ENCODE measurements at regions of chr5 and their contacts with region 1.

Region 1: GRCh38 chr5:148730943-148731861 is 76.9 kb upstream of the HTR4 start:
- DNase-seq: peak; percentile 21 to 85 (median 64)
- ATAC-seq: peak; percentile 95
- H3K4me3 ChIP-seq: peak overlapping the region in 1 of 2 experiments; percentile 31
- H3K4me3 Mint-ChIP-seq: peak overlapping the region; percentile 67
- H3K27ac ChIP-seq: no peak overlapping the region
- H3K27ac Mint-ChIP-seq: no peak overlapping the region
- H3K4me1 ChIP-seq: no peaks in the 10 kb centered on the region
- H3K4me1 Mint-ChIP-seq: peaks cover 5% of the 10 kb centered on the region
- H3K27me3 ChIP-seq: no peaks in the 10 kb centered on the region
- H3K27me3 Mint-ChIP-seq: peaks cover 3% of the 10 kb centered on the region
- CTCF ChIP-seq: peak; percentile 99

Region 2: GRCh38 chr5:147857302-147858129 is 873.7 kb before region 1 on chr5:
- CTCF ChIA-PET with region 1: interaction called, 3 read pairs
- POLR2A ChIA-PET with region 1: no interaction called
- intact Hi-C with region 1: loop called (anchors 5 kb)
- DNase-seq: peak in 7 of 9 experiments; percentile 1 to 56 (median 24)
- ATAC-seq: peak; percentile 40
- H3K4me3 ChIP-seq: no peak overlapping the region
- H3K4me3 Mint-ChIP-seq: no peak overlapping the region
- H3K27ac ChIP-seq: no peak overlapping the region
- H3K27ac Mint-ChIP-seq: no peak overlapping the region
- H3K4me1 ChIP-seq: no peaks in the 10 kb centered on the region
- H3K4me1 Mint-ChIP-seq: peaks cover 4% of the 10 kb centered on the region
- H3K27me3 ChIP-seq: no peaks in the 10 kb centered on the region
- H3K27me3 Mint-ChIP-seq: peaks cover 17% of the 10 kb centered on the region
- CTCF ChIP-seq: peak; percentile 83

Region 3: GRCh38 chr5:148290271-148291195 is 440.7 kb before region 1 on chr5:
- CTCF ChIA-PET with region 1: interaction called, 7 read pairs
- POLR2A ChIA-PET with region 1: no interaction called
- intact Hi-C with region 1: loop called in 1 of 2 experiments (anchors 5 kb)
- DNase-seq: peak in 2 of 9 experiments; percentile 3 to 24
- ATAC-seq: no peak
- H3K4me3 ChIP-seq: no peak overlapping the region
- H3K4me3 Mint-ChIP-seq: no peak overlapping the region
- H3K27ac ChIP-seq: no peak overlapping the region
- H3K27ac Mint-ChIP-seq: no peak overlapping the region
- H3K4me1 ChIP-seq: no peaks in the 10 kb centered on the region
- H3K4me1 Mint-ChIP-seq: no peaks in the 10 kb centered on the region
- H3K27me3 ChIP-seq: no peaks in the 10 kb centered on the region
- H3K27me3 Mint-ChIP-seq: peaks cover 7% of the 10 kb centered on the region
- CTCF ChIP-seq: peak; percentile 26

Region 4: DNA sequence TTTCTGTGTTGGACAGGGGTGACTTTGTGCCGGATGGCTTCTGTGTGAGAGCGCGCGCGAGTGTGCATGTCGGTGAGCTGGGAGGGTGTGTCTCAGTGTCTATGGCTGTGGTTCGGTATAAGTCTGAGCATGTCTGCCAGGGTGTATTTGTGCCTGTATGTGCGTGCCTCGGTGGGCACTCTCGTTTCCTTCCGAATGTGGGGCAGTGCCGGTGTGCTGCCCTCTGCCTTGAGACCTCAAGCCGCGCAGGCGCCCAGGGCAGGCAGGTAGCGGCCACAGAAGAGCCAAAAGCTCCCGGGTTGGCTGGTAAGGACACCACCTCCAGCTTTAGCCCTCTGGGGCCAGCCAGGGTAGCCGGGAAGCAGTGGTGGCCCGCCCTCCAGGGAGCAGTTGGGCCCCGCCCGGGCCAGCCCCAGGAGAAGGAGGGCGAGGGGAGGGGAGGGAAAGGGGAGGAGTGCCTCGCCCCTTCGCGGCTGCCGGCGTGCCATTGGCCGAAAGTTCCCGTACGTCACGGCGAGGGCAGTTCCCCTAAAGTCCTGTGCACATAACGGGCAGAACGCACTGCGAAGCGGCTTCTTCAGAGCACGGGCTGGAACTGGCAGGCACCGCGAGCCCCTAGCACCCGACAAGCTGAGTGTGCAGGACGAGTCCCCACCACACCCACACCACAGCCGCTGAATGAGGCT is 95.0 kb after region 1 on chr5 and contains the start of gene ADRB2:
- CTCF ChIA-PET with region 1: interaction called, 8 read pairs
- POLR2A ChIA-PET with region 1: no interaction called
- intact Hi-C with region 1: loop called in 1 of 2 experiments (anchors 5 kb)
- DNase-seq: peak; percentile 78 to 96 (median 86)
- ATAC-seq: peak; percentile 88
- H3K4me3 ChIP-seq: peak within 1 kb of the TSS; percentile 62 to 73
- H3K4me3 Mint-ChIP-seq: peak within 1 kb of the TSS; percentile 89
- H3K27ac ChIP-seq: peak within 1 kb of the TSS; percentile 57 to 75
- H3K27ac Mint-ChIP-seq: peak within 1 kb of the TSS; percentile 87
- H3K4me1 ChIP-seq: peaks cover 11% of the 10 kb centered on the region
- H3K4me1 Mint-ChIP-seq: peaks cover 53% of the 10 kb centered on the region
- H3K27me3 ChIP-seq: no peaks in the 10 kb centered on the region
- H3K27me3 Mint-ChIP-seq: no peaks in the 10 kb centered on the region
- CTCF ChIP-seq: no peak
- total RNA-seq, gene ADRB2: 7.6 to 8.8 TPM

Region 5: GRCh38 chr5:148988328-148988727 is 257.1 kb after region 1 on chr5:
- CTCF ChIA-PET with region 1: interaction called, 47 read pairs
- POLR2A ChIA-PET with region 1: no interaction called
- intact Hi-C with region 1: no loop called
- DNase-seq: no peak
- ATAC-seq: no peak
- H3K4me3 ChIP-seq: no peak overlapping the region
- H3K4me3 Mint-ChIP-seq: no peak overlapping the region
- H3K27ac ChIP-seq: no peak overlapping the region
- H3K27ac Mint-ChIP-seq: no peak overlapping the region
- H3K4me1 ChIP-seq: no peaks in the 10 kb centered on the region
- H3K4me1 Mint-ChIP-seq: no peaks in the 10 kb centered on the region
- H3K27me3 ChIP-seq: no peaks in the 10 kb centered on the region
- H3K27me3 Mint-ChIP-seq: peaks cover 18% of the 10 kb centered on the region
- CTCF ChIP-seq: no peak

Region 6: GRCh38 chr5:149035372-149035790 is 304.2 kb after region 1 on chr5:
- CTCF ChIA-PET with region 1: interaction called, 264 read pairs
- POLR2A ChIA-PET with region 1: interaction called, 3 read pairs
- intact Hi-C with region 1: loop called (anchors 1 kb)
- DNase-seq: peak; percentile 51 to 80 (median 67)
- ATAC-seq: peak; percentile 52
- H3K4me3 ChIP-seq: no peak overlapping the region
- H3K4me3 Mint-ChIP-seq: no peak overlapping the region
- H3K27ac ChIP-seq: no peak overlapping the region
- H3K27ac Mint-ChIP-seq: no peak overlapping the region
- H3K4me1 ChIP-seq: no peaks in the 10 kb centered on the region
- H3K4me1 Mint-ChIP-seq: peaks cover 15% of the 10 kb centered on the region
- H3K27me3 ChIP-seq: no peaks in the 10 kb centered on the region
- H3K27me3 Mint-ChIP-seq: peaks cover 6% of the 10 kb centered on the region
- CTCF ChIP-seq: peak; percentile 70

Region 7: GRCh38 chr5:149561848-149562247 is 830.6 kb after region 1 on chr5:
- CTCF ChIA-PET with region 1: interaction called, 3 read pairs
- POLR2A ChIA-PET with region 1: no interaction called
- intact Hi-C with region 1: loop called in 1 of 2 experiments (anchors 10 kb)
- DNase-seq: no peak
- ATAC-seq: no peak
- H3K4me3 ChIP-seq: no peak overlapping the region
- H3K4me3 Mint-ChIP-seq: no peak overlapping the region
- H3K27ac ChIP-seq: no peak overlapping the region
- H3K27ac Mint-ChIP-seq: no peak overlapping the region
- H3K4me1 ChIP-seq: peaks cover 4% of the 10 kb centered on the region
- H3K4me1 Mint-ChIP-seq: peaks cover 17% of the 10 kb centered on the region
- H3K27me3 ChIP-seq: no peaks in the 10 kb centered on the region
- H3K27me3 Mint-ChIP-seq: no peaks in the 10 kb centered on the region
- CTCF ChIP-seq: no peak